ENCODE measurements at regions of chr10 and their contacts with region 1.

Region 1: GRCh38 chr10:94334857-94335256 is 27.9 kb downstream of the NOC3L start:
- DNase-seq: no peak
- H3K4me3 ChIP-seq: no peak overlapping the region
- H3K27ac ChIP-seq: no peak overlapping the region
- H3K4me1 ChIP-seq: no peaks in the 10 kb centered on the region
- H3K27me3 ChIP-seq: no peaks in the 10 kb centered on the region
- CTCF ChIP-seq: no peak
- POLR2A ChIP-seq: no peak

Region 2: DNA sequence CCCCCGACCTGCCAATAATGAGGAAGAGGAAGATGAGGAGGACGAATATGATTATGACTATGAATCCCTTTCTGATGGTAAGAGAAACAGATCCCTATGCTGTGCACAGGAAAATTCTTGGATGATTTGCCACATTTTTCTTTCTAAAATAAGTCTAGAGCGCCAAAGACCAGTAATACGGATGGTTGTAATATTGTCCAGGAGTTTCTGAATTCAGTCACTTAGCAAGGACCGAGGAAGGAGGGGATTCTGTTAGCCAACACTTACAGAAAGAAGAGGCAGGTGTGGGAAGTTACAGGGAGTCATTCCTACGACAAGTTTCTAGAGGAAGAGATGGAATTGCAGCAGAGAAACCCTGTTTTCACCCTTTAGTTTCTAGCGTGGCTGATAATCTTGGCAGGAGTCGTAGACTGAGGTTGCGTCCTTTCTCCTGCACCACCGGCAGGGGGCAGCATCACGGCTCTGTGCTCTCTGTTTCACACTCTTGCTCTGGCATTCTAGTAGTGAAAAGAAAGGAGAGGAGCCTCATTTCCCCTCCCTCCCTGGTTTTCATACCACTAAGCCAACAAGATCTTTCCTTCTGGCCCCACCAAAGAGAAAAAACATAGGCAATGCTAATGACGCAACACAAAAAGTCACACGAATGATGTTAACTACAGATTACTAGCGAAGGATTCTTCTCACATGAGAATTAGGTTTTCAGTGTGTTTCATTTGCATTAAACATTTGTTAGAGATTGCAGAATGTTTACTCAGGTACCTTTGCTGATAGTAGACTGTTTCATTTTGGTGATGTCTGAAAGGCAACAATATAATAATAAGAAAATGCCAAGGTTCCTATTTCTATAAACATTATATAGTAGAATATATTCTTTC is 54.8 kb before region 1 on chr10:
- intact Hi-C with region 1: no loop called
- DNase-seq: no peak
- H3K4me3 ChIP-seq: no peak overlapping the region
- H3K27ac ChIP-seq: no peak overlapping the region
- H3K4me1 ChIP-seq: no peaks in the 10 kb centered on the region
- H3K27me3 ChIP-seq: no peaks in the 10 kb centered on the region
- CTCF ChIP-seq: peak; percentile 29 to 72 (median 55)
- POLR2A ChIP-seq: no peak

Region 3: GRCh38 chr10:94524711-94525110 is 189.9 kb after region 1 on chr10:
- intact Hi-C with region 1: loop called (anchors 5 kb)
- DNase-seq: no peak
- H3K4me3 ChIP-seq: no peak overlapping the region
- H3K27ac ChIP-seq: no peak overlapping the region
- H3K4me1 ChIP-seq: no peaks in the 10 kb centered on the region
- H3K27me3 ChIP-seq: no peaks in the 10 kb centered on the region
- CTCF ChIP-seq: no peak
- POLR2A ChIP-seq: no peak

Measured in breast epithelium (tissue), 4 donors.